ENCODE measurements at regions of chr20 and their contacts with region 1.

Region 1: GRCh38 chr20:23050847-23051631 is 1.6 kb upstream of the THBD start:
- DNase-seq: peak; percentile 72 to 86 (median 78)
- H3K4me3 ChIP-seq: peak overlapping the region; percentile 43 to 79 (median 50)
- H3K4me3 Mint-ChIP-seq: peak overlapping the region; percentile 88 to 93
- H3K27ac ChIP-seq: peak overlapping the region; percentile 45 to 91
- H3K27ac Mint-ChIP-seq: peak overlapping the region; percentile 88 to 97 (median 92)
- H3K4me1 ChIP-seq: peaks cover 43 to 57% of the 10 kb centered on the region in 2 donors
- H3K4me1 Mint-ChIP-seq: peaks cover 42% of the 10 kb centered on the region
- H3K27me3 ChIP-seq: peaks cover 0 to 11% of the 10 kb centered on the region in 2 donors
- H3K27me3 Mint-ChIP-seq: peaks cover 9 to 22% (median 20%) of the 10 kb centered on the region in 3 donors
- CTCF ChIP-seq: peak; percentile 97

Region 2: GRCh38 chr20:23235173-23236027 is 184.4 kb after region 1 on chr20:
- intact Hi-C with region 1: loop called (anchors 2 to 5 kb)
- DNase-seq: peak; percentile 66 to 78 (median 73)
- H3K4me3 ChIP-seq: no peak overlapping the region
- H3K4me3 Mint-ChIP-seq: no peak overlapping the region
- H3K27ac ChIP-seq: peak overlapping the region in 1 of 2 donors; percentile 18
- H3K27ac Mint-ChIP-seq: peak overlapping the region in 3 of 7 donors; percentile 53 to 92 (median 86)
- H3K4me1 ChIP-seq: peaks cover 22 to 29% of the 10 kb centered on the region in 2 donors
- H3K4me1 Mint-ChIP-seq: peaks cover 33% of the 10 kb centered on the region
- H3K27me3 ChIP-seq: no peaks in the 10 kb centered on the region
- H3K27me3 Mint-ChIP-seq: peaks cover 2 to 9% (median 7%) of the 10 kb centered on the region in 3 donors
- CTCF ChIP-seq: peak; percentile 94

Measured in CD14-positive monocyte (primary cell).